AG04450 (cell line): ENCODE measurements at regions of chr2 and their contacts with region 1.

Region 1: DNA sequence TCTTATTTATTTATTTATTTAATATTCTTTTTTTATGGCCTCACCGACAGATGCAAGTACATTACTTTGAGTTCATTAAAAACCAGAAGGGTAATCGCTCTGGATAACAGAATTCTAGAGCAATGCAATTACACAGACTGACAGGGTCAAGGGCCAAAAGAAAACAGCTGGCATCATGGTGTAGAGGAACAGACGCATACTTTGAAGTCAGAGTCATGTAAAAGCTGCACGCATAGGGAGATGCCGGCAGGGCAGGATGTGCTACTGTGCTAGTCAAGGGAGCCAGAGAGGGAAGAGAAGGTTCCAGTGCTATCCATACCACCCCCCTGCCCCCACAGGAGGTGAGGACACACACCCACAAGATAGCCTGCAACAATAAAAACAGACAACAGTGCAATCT is 115.2 kb upstream of the TFCP2L1 start:
- DNase-seq: peak; percentile 24
- H3K4me3 ChIP-seq: no peak overlapping the region
- H3K27ac ChIP-seq: no peak overlapping the region
- H3K27me3 ChIP-seq: no peaks in the 10 kb centered on the region
- CTCF ChIP-seq: no peak

Region 2: DNA sequence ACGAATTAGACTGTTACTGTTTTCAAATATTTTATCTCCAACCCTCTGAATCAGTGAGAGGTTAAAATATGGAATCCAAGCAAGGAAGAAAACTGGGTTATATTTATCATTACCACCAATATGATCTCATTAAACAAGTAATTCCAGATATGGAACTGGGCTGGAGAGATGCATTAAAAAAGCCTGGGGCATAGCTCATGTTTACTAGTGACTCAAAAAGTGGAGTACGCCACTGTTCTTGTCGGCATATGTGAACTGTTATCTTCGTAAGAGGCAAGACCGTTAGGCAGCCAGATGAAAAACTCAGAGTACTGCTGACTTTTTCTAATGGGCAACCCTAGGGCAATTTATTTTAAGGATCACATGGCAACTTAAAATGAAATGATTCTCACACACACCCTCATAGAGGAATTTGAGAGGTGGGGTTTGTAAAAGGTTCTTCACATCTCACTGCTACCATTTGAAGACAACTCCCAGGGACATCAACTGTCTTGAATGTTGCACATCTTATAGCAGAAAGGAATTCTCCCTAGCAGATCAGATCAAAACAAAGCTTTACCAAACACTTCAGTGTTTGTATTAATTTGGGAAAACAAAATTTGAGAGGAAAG is 10.0 kb before region 1 on chr2:
- CTCF ChIA-PET with region 1: interaction called, 17 read pairs
- POLR2A ChIA-PET with region 1: no interaction called
- DNase-seq: no peak
- H3K4me3 ChIP-seq: no peak overlapping the region
- H3K27ac ChIP-seq: no peak overlapping the region
- H3K27me3 ChIP-seq: no peaks in the 10 kb centered on the region
- CTCF ChIP-seq: no peak

Region 3: GRCh38 chr2:121429119-121429903 is 29.1 kb after region 1 on chr2:
- CTCF ChIA-PET with region 1: interaction called, 10 read pairs
- POLR2A ChIA-PET with region 1: no interaction called
- DNase-seq: no peak
- H3K4me3 ChIP-seq: no peak overlapping the region
- H3K27ac ChIP-seq: no peak overlapping the region
- H3K27me3 ChIP-seq: no peaks in the 10 kb centered on the region
- CTCF ChIP-seq: no peak

Region 4: DNA sequence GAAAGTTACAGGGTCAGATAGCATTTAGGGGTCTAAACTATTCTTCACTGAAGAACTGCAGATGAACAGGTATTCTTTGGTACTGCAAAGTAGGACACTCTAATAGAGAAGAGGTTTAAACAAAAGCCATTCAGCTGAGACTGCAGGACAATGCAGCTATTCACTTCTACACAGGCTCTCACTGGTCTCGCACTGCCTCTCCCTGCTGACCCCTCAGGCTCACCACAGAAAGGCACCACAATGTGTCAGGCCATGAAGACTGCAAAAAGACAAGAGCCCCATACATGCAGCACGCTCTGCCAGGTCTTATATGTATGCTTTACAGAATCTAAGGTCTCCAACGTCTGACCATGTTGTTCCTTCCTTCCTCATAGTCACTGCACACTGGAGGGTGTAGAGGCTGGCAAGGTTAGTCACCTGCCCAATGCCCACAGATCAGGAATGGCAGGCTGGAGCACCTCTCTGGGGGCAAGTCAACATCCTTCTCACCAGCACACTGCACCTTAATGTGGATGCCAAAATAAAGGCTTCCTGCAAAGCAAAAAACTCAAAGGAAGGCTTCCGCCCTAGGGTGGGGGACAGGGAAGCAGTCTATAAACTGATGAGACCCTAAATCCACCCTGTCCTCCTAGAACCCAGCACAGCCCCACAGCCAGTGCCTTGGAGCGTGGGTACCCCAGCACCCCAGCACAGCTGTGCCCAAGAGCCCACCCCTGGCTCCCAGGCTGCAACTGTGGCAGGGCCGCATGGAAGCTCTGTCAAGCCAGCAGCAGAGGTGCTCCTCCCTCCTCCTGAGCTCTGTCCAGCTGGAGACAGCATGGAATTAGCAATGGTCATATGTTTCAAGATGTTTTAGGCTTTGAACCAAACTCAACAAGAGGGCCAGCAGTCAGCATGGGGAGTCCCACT is 119.8 kb after region 1 on chr2:
- CTCF ChIA-PET with region 1: interaction called, 10 read pairs
- POLR2A ChIA-PET with region 1: no interaction called
- DNase-seq: no peak
- H3K4me3 ChIP-seq: no peak overlapping the region
- H3K27ac ChIP-seq: no peak overlapping the region
- H3K27me3 ChIP-seq: no peaks in the 10 kb centered on the region
- CTCF ChIP-seq: no peak